ENCODE measurements at regions of chr3 and their contacts with region 1.

Region 1: DNA sequence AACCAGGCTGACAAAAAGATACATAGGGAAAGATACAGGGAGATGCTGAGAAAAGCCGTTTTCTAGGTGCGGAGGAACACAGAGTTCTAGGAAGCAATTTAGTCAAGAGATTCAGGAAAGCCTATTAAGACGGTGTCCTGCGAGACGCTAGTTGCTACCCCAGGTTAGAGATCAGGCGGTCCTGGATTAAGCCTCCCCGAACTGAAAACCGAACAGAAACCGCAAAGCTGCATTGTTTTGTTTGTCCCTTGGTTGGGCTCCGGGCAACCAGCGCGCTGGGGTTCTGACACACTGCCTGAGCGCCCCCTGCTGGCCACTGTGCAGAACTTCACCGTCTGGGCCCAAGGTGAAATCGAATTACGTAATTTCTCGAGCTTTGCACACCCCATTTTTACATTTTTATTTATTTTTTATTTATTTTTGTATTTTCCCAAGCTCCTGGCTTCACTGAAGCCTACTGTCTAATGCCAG is 37.3 kb upstream of the NDUFB4 start:
- DNase-seq: peak; percentile 78 to 87
- H3K4me3 ChIP-seq: peak overlapping the region; percentile 57
- H3K27ac ChIP-seq: no peak overlapping the region
- H3K4me1 ChIP-seq: peaks cover 15% of the 10 kb centered on the region
- H3K27me3 ChIP-seq: no peaks in the 10 kb centered on the region
- CTCF ChIP-seq: peak; percentile 98

Region 2: DNA sequence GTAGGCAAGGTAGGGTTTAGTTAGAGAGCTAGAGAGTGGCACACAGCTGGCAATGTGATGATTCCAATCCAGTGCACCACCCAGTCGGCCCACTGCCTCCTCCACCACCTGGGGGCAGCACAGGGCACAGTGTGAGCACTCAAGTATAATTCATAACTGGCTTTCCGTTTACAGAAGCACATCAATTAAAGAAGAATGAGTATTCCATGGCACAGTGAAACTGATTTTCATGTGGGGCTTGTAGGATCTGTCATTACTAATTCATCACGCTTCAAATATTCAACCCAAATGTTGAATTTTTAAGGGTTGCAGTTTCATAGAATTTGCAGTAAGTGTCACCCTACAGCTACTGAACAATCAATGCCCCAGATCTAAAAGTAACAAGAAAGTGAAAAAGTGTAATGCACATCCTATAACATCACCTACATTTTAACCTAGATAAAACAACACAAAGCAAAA is 1674.0 kb before region 1 on chr3:
- CTCF ChIA-PET with region 1: no interaction called
- POLR2A ChIA-PET with region 1: no interaction called
- intact Hi-C with region 1: loop called (anchors 2 kb)
- DNase-seq: peak in 1 of 2 experiments; percentile 66
- H3K4me3 ChIP-seq: no peak overlapping the region
- H3K27ac ChIP-seq: no peak overlapping the region
- H3K4me1 ChIP-seq: no peaks in the 10 kb centered on the region
- H3K27me3 ChIP-seq: no peaks in the 10 kb centered on the region
- CTCF ChIP-seq: peak; percentile 83

Region 3: GRCh38 chr3:120348981-120349818 is 209.6 kb before region 1 on chr3 and contains the start of gene LRRC58:
- CTCF ChIA-PET with region 1: interaction called, 4 read pairs
- POLR2A ChIA-PET with region 1: interaction called, 5 read pairs
- intact Hi-C with region 1: loop called (anchors 1 kb)
- DNase-seq: peak; percentile 77 to 95
- H3K4me3 ChIP-seq: peak within 1 kb of the TSS; percentile 82
- H3K27ac ChIP-seq: peak within 1 kb of the TSS; percentile 60
- H3K4me1 ChIP-seq: peaks cover 25% of the 10 kb centered on the region
- H3K27me3 ChIP-seq: no peaks in the 10 kb centered on the region
- CTCF ChIP-seq: no peak; the same call in 1 of the 2 replicates
- total RNA-seq, gene LRRC58: 22.2 and 28.9 TPM in 2 replicates

Region 4: DNA sequence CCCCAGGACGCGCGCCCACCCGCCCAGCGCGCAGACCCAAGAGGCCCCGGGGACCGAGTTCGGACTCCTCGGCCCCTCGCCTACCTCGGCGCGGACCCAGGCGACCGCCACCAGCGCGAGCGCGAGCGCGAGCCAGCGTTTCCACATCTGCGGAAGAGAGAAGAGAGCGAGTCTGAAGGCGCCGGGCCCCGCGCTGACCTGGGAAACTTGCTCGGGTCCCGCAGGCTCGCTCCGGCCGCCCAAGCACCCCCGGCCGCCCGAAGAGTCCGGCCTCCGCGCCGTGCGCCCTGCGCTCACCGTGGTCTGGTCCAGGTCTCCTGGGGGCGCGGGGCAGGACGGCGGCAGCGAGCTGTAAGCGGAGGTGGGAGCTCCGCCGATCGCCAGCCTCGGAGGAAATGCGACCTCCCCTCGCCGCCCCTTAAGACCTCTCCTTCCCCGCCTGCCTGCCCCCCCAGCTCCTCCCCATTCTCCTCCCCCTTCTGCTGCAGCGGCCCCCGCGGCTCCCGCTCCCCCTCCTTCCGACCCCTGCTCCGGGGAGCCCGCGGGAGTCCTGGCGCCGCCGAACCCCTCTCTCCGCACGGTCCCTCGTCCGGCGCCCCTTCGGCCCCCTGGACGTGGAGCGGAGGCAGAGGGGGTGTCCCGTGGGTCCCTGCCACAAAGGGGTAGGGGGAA is 108.1 kb before region 1 on chr3 and contains the start of gene FSTL1:
- CTCF ChIA-PET with region 1: no interaction called
- POLR2A ChIA-PET with region 1: interaction called, 15 read pairs
- intact Hi-C with region 1: loop called (anchors 1 kb)
- DNase-seq: peak in 1 of 2 experiments; percentile 46
- H3K4me3 ChIP-seq: peak within 1 kb of the TSS; percentile 74
- H3K27ac ChIP-seq: peak within 1 kb of the TSS; percentile 53
- H3K4me1 ChIP-seq: peaks cover 20% of the 10 kb centered on the region
- H3K27me3 ChIP-seq: no peaks in the 10 kb centered on the region
- CTCF ChIP-seq: no peak
- total RNA-seq, gene FSTL1: 225 and 256 TPM in 2 replicates

Region 5: DNA sequence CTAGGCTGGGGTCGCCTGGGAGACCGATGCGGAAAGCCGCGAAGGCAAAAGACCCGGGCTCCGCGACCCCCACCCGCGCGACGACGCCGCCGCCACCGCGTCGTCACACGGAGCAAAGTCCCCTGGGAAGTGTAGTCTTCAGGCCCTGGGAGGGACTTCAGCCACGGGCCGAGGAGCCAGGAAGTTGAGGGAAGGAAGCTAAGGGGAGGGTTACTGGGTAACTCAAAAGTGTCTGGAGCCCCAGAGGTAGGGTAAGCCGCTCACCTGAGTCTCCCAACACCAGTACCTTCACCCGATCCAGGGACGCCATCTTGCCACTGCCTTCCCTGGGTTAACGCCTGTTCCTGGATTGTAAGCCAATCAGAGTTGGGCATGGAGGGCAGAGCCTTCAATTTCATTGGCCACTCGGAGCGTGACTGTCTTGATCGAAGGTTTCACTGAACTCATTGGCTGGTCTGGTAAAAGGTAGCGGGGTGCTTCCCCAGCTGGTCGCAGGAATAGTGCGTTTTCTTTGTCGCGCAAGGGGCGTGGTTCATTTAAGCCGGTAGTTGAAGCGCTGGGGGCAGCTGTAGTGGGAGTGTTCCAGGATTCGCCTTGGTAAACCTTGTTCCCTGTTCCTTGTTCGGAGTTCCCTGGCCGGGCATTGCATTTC is 183.5 kb after region 1 on chr3 and contains the starts of genes GTF2E1 and RABL3:
- CTCF ChIA-PET with region 1: interaction called, 6 read pairs
- POLR2A ChIA-PET with region 1: interaction called, 18 read pairs
- intact Hi-C with region 1: no loop called
- DNase-seq: peak; percentile 97 to 99
- H3K4me3 ChIP-seq: peak within 1 kb of the TSS; percentile 98
- H3K27ac ChIP-seq: peak within 1 kb of the TSS; percentile 90
- H3K4me1 ChIP-seq: peaks cover 14% of the 10 kb centered on the region
- H3K27me3 ChIP-seq: no peaks in the 10 kb centered on the region
- CTCF ChIP-seq: no peak
- total RNA-seq, gene GTF2E1: 22.2 and 23.3 TPM in 2 replicates
- total RNA-seq, gene RABL3: 17.1 and 29.8 TPM in 2 replicates

Region 6: GRCh38 chr3:121529308-121529707 is 970.5 kb after region 1 on chr3:
- CTCF ChIA-PET with region 1: interaction called, 3 read pairs
- POLR2A ChIA-PET with region 1: no interaction called
- intact Hi-C with region 1: loop called (anchors 10 kb)
- DNase-seq: no peak
- H3K4me3 ChIP-seq: no peak overlapping the region
- H3K27ac ChIP-seq: no peak overlapping the region
- H3K4me1 ChIP-seq: no peaks in the 10 kb centered on the region
- H3K27me3 ChIP-seq: no peaks in the 10 kb centered on the region
- CTCF ChIP-seq: peak; percentile 51